Dorsolateral prefrontal cortex (tissue), 120 donors: ENCODE measurements at regions of chr11 and their contacts with region 1.

Region 1: GRCh38 chr11:119095066-119095880 is 6.4 kb downstream of the DPAGT1 start:
- DNase-seq: peak; percentile 99 to 100 (median 100)
- H3K4me3 ChIP-seq: peak overlapping the region; percentile 72 to 99 (median 89)
- H3K27ac ChIP-seq: peak overlapping the region; percentile 76 to 97 (median 93)
- H3K27me3 ChIP-seq: no peaks in the 10 kb centered on the region
- CTCF ChIP-seq: peak in 29 of 56 donors; percentile 2 to 60 (median 31)

Region 2: GRCh38 chr11:119018074-119018938 is 77.0 kb before region 1 on chr11 and contains the starts of genes RPS25 and TRAPPC4:
- intact Hi-C with region 1: loop called in 1 of 2 experiments (anchors 5 kb)
- DNase-seq: peak; percentile 92 to 99 (median 98)
- H3K4me3 ChIP-seq: peak within 1 kb of the TSS; percentile 61 to 100 (median 93)
- H3K27ac ChIP-seq: peak within 1 kb of the TSS; percentile 79 to 99 (median 94)
- H3K27me3 ChIP-seq: no peaks in the 10 kb centered on the region
- CTCF ChIP-seq: peak in 46 of 56 donors; percentile 6 to 70 (median 43)
- total RNA-seq, gene RPS25: 267 to 575 (median 429) TPM
- total RNA-seq, gene TRAPPC4: 29.3 to 71.5 (median 49.7) TPM

Region 3: GRCh38 chr11:119057000-119057769 is 38.1 kb before region 1 on chr11 and contains the start of gene HYOU1:
- intact Hi-C with region 1: loop called (anchors 2 kb)
- DNase-seq: peak; percentile 95 to 98 (median 96)
- H3K4me3 ChIP-seq: peak within 1 kb of the TSS; percentile 69 to 100 (median 94)
- H3K27ac ChIP-seq: peak within 1 kb of the TSS in 58 of 59 donors; percentile 14 to 95 (median 84)
- H3K27me3 ChIP-seq: no peaks in the 10 kb centered on the region
- CTCF ChIP-seq: peak in 33 of 56 donors; percentile 2 to 59 (median 28)
- total RNA-seq, gene HYOU1: 94.9 to 199 (median 139) TPM

Region 4: GRCh38 chr11:119067371-119068222 is 27.7 kb before region 1 on chr11 and contains the start of gene VPS11:
- intact Hi-C with region 1: loop called in 1 of 2 experiments (anchors 2 kb)
- DNase-seq: peak; percentile 95 to 99 (median 97)
- H3K4me3 ChIP-seq: peak within 1 kb of the TSS; percentile 68 to 100 (median 87)
- H3K27ac ChIP-seq: peak within 1 kb of the TSS; percentile 51 to 97 (median 90)
- H3K27me3 ChIP-seq: no peaks in the 10 kb centered on the region
- CTCF ChIP-seq: peak in 39 of 56 donors; percentile 3 to 61 (median 33)
- total RNA-seq, gene VPS11: 33.3 to 65.7 (median 50.5) TPM

Region 5: GRCh38 chr11:119084663-119085436 is 10.4 kb before region 1 on chr11 and contains the start of gene HMBS:
- intact Hi-C with region 1: loop called in 1 of 2 experiments (anchors 1 kb)
- DNase-seq: peak; percentile 93 to 97 (median 96)
- H3K4me3 ChIP-seq: peak within 1 kb of the TSS; percentile 61 to 99 (median 85)
- H3K27ac ChIP-seq: peak within 1 kb of the TSS; percentile 76 to 100 (median 96)
- H3K27me3 ChIP-seq: no peaks in the 10 kb centered on the region
- CTCF ChIP-seq: peak in 15 of 56 donors; percentile 5 to 36 (median 13)
- total RNA-seq, gene HMBS: 6.8 to 18.6 (median 12.6) TPM